Mammary epithelial cell (primary cell): ENCODE measurements at regions of chr2 and their contacts with region 1.

Region 1: DNA sequence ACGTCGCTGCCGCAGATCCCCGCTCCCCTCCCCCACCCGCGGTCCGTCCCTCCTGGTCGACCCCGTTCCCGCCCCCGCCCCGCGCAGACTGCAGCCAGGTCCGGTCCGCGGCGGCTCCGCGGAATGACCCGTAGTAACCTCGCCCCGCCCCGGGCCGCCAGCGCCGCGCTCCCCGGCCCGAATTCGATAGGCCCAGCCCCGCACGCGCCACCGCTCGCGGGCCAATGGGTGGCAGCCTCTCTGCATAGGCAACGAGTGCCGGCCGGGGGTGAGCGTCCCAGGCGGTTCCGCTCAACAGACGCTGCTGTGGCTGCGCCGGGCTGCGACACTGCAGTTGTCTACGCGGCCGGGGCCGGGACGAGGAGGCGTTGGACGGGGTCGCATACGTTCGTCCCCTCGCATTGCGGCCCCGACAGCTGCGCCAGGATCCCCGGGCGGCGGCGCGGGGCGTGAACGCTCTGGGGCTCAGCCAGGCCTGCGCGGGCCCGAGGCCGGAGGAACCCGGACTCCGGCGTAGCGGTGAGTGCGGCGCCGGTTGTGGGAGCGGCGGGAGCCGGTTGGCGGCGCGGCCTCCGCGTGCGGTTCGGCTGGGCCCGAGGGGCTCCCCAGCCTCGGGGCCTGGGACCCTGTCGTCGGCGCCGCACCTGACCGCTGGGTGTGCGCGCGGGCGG is at the start of gene ACSL3:
- DNase-seq: peak; percentile 95
- H3K4me3 ChIP-seq: peak within 1 kb of the TSS; percentile 86 to 97 (median 90)
- H3K27ac ChIP-seq: peak within 1 kb of the TSS; percentile 91
- H3K4me1 ChIP-seq: peaks cover 37% of the 10 kb centered on the region
- H3K27me3 ChIP-seq: no peaks in the 10 kb centered on the region
- CTCF ChIP-seq: no peak
- total RNA-seq, gene ACSL3: 199 to 213 TPM

Region 2: DNA sequence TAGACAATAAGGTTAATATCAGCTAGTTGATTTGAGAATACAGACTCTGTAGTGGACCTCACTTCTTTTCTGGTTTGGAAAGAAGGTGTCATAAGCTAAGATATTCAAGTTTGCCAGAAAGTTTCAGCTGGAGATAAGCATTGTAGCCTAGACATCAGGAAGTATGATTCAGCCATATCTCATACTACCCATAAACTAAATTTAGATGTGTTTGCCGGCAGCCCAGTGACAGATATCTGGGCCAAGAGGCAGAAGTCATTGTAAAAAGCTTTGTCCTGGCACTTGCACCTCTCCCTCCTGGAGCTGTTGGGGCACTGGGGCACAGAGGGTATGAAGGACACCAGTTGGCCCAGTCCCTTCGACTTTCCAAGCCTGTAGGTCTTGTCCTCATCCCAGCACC is 1416.8 kb before region 1 on chr2:
- CTCF ChIA-PET with region 1: interaction called, 39 read pairs
- dilution Hi-C with region 1: no loop called
- in situ Hi-C with region 1: no loop called
- intact Hi-C with region 1: no loop called
- DNase-seq: peak; percentile 56
- H3K4me3 ChIP-seq: no peak overlapping the region
- H3K27ac ChIP-seq: no peak overlapping the region
- H3K4me1 ChIP-seq: peaks cover 8% of the 10 kb centered on the region
- H3K27me3 ChIP-seq: no peaks in the 10 kb centered on the region
- CTCF ChIP-seq: no peak

Region 3: GRCh38 chr2:222518570-222519381 is 342.1 kb before region 1 on chr2:
- CTCF ChIA-PET with region 1: no interaction called
- dilution Hi-C with region 1: no loop called
- in situ Hi-C with region 1: no loop called
- intact Hi-C with region 1: no loop called
- DNase-seq: peak; percentile 94
- H3K4me3 ChIP-seq: peak overlapping the region in 1 of 3 experiments; percentile 11
- H3K27ac ChIP-seq: peak overlapping the region; percentile 56
- H3K4me1 ChIP-seq: peaks cover 13% of the 10 kb centered on the region
- H3K27me3 ChIP-seq: no peaks in the 10 kb centered on the region
- CTCF ChIP-seq: no peak

Region 4: DNA sequence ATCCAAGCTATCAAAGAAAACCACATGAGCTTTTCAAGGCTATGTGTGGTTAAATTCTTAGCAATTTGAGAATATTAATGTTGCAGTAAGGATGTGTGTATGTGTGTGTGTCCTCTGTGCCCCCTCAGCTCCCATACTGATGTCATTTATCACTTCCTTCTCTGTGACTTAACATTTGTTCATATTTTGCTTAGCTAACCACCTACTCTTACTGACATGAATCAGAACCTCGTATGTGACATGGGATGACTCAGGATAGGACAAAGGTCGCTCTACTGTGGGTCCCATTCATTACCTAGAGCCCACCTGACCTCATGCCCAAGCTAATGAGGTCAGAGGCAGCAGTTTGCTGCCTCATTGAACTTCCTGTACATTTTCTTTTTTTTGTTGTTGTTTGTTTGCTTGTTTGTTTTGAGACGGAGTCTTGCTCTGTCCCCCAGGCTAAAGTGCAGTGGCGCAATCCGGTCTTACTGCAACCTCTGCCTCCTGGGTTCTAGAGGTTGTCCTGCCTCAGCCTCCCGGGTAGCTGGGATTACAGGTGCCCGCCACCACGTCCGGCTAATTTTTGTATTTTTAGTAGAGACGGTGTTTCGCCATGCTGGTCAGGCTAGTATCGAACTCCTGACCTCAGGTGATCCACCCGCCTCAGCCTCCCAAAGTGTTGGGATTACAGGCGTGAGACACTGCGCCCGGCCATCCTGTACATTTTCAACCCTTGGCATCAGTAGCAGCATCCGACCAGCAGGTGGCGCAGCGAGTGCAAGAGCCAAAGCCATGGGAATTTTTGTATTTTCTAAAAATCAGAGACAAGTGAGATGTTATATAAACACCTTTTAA is 153.0 kb before region 1 on chr2:
- CTCF ChIA-PET with region 1: interaction called, 5 read pairs
- dilution Hi-C with region 1: no loop called
- in situ Hi-C with region 1: no loop called
- intact Hi-C with region 1: loop called (anchors 1 kb)
- DNase-seq: peak; percentile 68
- H3K4me3 ChIP-seq: no peak overlapping the region
- H3K27ac ChIP-seq: no peak overlapping the region
- H3K4me1 ChIP-seq: peaks cover 8% of the 10 kb centered on the region
- H3K27me3 ChIP-seq: no peaks in the 10 kb centered on the region
- CTCF ChIP-seq: peak; percentile 83 to 91

Region 5: DNA sequence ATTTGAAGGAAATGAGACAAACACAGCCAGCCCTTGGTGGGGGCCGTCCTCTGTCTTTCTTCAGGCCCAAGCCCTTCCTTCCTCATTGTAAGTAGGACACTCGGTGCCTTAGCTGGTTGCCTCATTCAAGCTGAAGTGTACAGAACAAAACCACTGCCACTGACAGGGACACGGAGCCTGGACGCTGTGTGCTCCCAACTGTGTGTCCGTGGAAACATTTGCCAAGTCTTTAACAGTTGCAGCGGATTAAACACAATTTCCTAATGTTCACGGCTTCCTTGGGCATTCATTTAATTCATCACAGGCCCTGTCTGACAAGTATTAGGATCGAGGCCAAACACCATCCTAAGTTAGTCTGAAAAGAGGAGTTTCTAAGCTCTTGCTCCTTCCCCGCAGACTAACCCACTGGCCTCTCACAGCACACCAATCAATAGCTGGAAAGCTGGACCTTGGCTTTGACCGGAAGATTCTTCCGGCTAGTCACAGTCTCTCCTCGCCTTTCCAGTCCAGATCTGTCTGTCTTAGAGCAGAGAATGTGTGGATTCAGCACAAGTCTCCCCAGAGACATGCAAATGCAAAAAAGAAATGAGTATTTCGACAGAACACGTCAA is 68.8 kb before region 1 on chr2:
- CTCF ChIA-PET with region 1: interaction called, 17 read pairs
- dilution Hi-C with region 1: no loop called
- in situ Hi-C with region 1: loop called in 1 of 2 experiments (anchors 5 kb)
- intact Hi-C with region 1: loop called (anchors 1 kb)
- DNase-seq: no peak
- H3K4me3 ChIP-seq: no peak overlapping the region
- H3K27ac ChIP-seq: no peak overlapping the region
- H3K4me1 ChIP-seq: peaks cover 20% of the 10 kb centered on the region
- H3K27me3 ChIP-seq: no peaks in the 10 kb centered on the region
- CTCF ChIP-seq: no peak

Region 6: DNA sequence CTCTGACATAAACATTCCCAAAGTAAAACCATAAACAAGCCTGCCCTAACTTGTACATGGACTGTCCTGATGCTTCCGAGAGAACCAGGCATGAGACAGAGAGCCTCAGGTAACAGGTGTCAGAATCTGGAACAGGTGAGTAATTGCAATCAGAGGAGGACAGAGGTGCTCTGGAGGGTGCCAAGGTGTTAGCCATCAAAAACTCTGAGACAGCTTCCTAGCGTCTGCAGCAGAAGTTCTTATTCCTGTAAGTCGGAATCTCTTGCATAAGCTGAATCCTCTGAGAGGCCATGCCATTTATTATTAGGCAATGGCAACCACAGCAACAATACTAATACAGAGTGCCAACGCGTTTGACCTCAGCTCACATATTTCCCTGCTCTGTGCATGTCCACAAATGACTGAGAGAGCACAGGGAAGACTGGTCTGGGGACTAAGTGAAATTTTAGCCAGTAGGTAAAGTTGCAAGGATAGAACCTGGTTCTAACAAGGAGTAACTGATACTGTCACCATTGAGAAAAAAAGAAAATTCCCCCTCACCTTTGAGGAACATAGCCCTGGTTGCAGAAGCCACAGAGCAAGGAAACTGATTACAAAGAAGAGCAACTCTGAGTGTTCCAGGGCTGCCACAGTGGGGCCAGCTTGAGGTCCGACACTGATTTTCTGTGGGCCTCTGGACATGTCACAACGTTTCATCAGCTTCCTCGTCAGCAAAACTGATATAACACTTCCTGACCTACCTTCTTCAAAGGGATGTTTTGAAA is 55.2 kb before region 1 on chr2:
- CTCF ChIA-PET with region 1: no interaction called
- dilution Hi-C with region 1: no loop called
- in situ Hi-C with region 1: no loop called
- intact Hi-C with region 1: loop called (anchors 1 kb)
- DNase-seq: peak; percentile 68
- H3K4me3 ChIP-seq: no peak overlapping the region
- H3K27ac ChIP-seq: peak overlapping the region; percentile 72
- H3K4me1 ChIP-seq: peaks cover 31% of the 10 kb centered on the region
- H3K27me3 ChIP-seq: no peaks in the 10 kb centered on the region
- CTCF ChIP-seq: no peak

Region 7: GRCh38 chr2:222903234-222904220 is 42.7 kb after region 1 on chr2:
- CTCF ChIA-PET with region 1: interaction called, 4 read pairs
- dilution Hi-C with region 1: no loop called
- in situ Hi-C with region 1: no loop called
- intact Hi-C with region 1: loop called (anchors 1 kb)
- DNase-seq: peak; percentile 37
- H3K4me3 ChIP-seq: no peak overlapping the region
- H3K27ac ChIP-seq: no peak overlapping the region
- H3K4me1 ChIP-seq: peaks cover 44% of the 10 kb centered on the region
- H3K27me3 ChIP-seq: no peaks in the 10 kb centered on the region
- CTCF ChIP-seq: peak; percentile 67 to 68

Region 8: DNA sequence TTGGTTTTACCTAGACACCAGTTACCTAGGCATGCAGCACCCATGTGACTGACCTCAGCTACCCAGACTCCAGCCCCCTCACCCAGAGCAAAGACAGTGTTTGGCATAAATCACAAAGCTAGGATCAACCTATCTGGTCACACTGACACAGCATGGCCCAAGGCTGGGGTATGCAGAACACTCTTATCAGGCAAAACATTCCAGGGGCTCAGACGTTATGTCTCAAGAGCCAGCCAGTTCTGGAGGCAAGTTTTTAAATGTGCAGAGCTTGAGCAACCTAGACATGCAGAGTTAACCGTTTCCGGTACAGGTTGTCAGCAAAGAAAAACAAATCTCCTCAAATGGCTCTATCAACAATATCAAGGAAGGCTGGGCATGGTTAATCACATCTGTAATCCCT is 883.7 kb after region 1 on chr2:
- CTCF ChIA-PET with region 1: no interaction called
- dilution Hi-C with region 1: no loop called
- in situ Hi-C with region 1: no loop called
- intact Hi-C with region 1: no loop called
- DNase-seq: no peak
- H3K4me3 ChIP-seq: no peak overlapping the region
- H3K27ac ChIP-seq: no peak overlapping the region
- H3K4me1 ChIP-seq: peaks cover 5% of the 10 kb centered on the region
- H3K27me3 ChIP-seq: no peaks in the 10 kb centered on the region
- CTCF ChIP-seq: no peak